ENCODE measurements at regions of chr15 and their contacts with region 1.

Region 1: GRCh38 chr15:44426975-44427755 is at the start of gene CTDSPL2:
- DNase-seq: peak; percentile 99
- H3K4me3 ChIP-seq: peak within 1 kb of the TSS; percentile 73 to 86 (median 77)
- H3K27ac ChIP-seq: peak within 1 kb of the TSS; percentile 93 to 97 (median 96)
- H3K4me1 ChIP-seq: peaks cover 23 to 43% (median 41%) of the 10 kb centered on the region in 4 donors
- H3K27me3 ChIP-seq: no peaks in the 10 kb centered on the region
- CTCF ChIP-seq: peak; percentile 34 to 46 (median 39)
- EP300 ChIP-seq: no peak
- POLR2A ChIP-seq: no peak
- total RNA-seq, gene CTDSPL2: 28.8 to 46.4 (median 43.8) TPM

Region 2: GRCh38 chr15:44289352-44289790 is 137.8 kb before region 1 on chr15:
- intact Hi-C with region 1: loop called (anchors 2 kb)
- DNase-seq: no peak
- H3K4me3 ChIP-seq: peak overlapping the region; percentile 67 to 98 (median 92)
- H3K27ac ChIP-seq: peak overlapping the region; percentile 87 to 94 (median 92)
- H3K4me1 ChIP-seq: peaks cover 21 to 38% (median 37%) of the 10 kb centered on the region in 4 donors
- H3K27me3 ChIP-seq: peaks cover 0 to 8% (median 2%) of the 10 kb centered on the region in 4 donors
- CTCF ChIP-seq: no peak
- EP300 ChIP-seq: no peak
- POLR2A ChIP-seq: no peak

Region 3: GRCh38 chr15:44501768-44502366 is 74.7 kb after region 1 on chr15:
- intact Hi-C with region 1: loop called (anchors 5 kb)
- DNase-seq: no peak
- H3K4me3 ChIP-seq: no peak overlapping the region
- H3K27ac ChIP-seq: no peak overlapping the region
- H3K4me1 ChIP-seq: peaks cover 0 to 3% (median 0%) of the 10 kb centered on the region in 4 donors
- H3K27me3 ChIP-seq: no peaks in the 10 kb centered on the region
- CTCF ChIP-seq: peak; percentile 46 to 70 (median 56)
- EP300 ChIP-seq: no peak
- POLR2A ChIP-seq: no peak

Region 4: DNA sequence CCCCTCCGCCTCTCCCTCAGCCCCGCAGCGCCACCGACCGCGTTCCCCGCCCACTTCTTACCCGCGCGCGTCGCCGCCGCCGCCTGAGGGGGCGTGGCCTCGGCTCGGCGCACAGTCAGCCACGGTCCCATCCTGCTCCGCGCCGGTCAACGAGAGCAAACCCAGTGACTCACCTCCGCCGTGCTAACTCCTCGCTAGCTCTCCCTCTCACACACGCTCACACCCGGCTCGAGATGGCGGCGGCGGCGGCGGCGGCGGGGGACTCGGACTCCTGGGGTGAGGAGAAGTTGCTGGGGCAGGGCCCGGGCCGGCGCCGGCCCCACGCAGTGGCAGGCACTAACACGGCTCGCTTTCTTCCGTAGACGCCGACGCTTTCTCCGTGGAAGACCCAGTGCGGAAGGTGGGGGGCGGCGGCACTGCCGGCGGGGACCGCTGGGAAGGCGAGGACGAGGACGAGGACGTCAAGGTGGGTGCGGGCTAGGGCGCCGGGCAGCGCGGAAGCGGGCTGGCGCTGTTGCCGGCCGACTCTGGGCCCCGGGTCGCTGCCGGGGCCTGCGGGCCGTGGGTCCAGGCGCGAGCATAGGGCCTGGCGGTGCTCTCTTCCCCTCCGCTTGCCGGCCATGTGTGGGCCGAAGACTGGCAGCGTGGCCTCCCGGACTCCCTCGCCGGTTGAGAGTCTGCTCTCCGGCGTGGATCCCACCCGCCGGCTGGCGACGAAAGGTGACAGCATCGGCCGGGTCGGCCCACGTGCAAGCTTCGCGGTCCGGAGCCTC is 110.0 kb after region 1 on chr15 and contains the start of gene EIF3J:
- intact Hi-C with region 1: loop called (anchors 5 kb)
- DNase-seq: no peak
- H3K4me3 ChIP-seq: peak within 1 kb of the TSS; percentile 79 to 99 (median 88)
- H3K27ac ChIP-seq: peak within 1 kb of the TSS; percentile 93 to 99 (median 98)
- H3K4me1 ChIP-seq: peaks cover 42 to 55% (median 52%) of the 10 kb centered on the region in 4 donors
- H3K27me3 ChIP-seq: no peaks in the 10 kb centered on the region
- CTCF ChIP-seq: no peak
- EP300 ChIP-seq: no peak
- POLR2A ChIP-seq: peak; percentile 74
- total RNA-seq, gene EIF3J: 46.2 to 60.6 (median 53.7) TPM

Measured in esophagus muscularis mucosa (tissue), 4 donors.